ENCODE measurements at regions of chr5 and their contacts with region 1.

Region 1: GRCh38 chr5:175700991-175701390 is 43.1 kb downstream of the HRH2 start:
- DNase-seq: no peak
- H3K4me3 ChIP-seq: no peak overlapping the region
- H3K27ac ChIP-seq: no peak overlapping the region
- H3K4me1 ChIP-seq: no peaks in the 10 kb centered on the region
- H3K27me3 ChIP-seq: no peaks in the 10 kb centered on the region
- CTCF ChIP-seq: peak; percentile 18 to 49 (median 44)
- EP300 ChIP-seq: no peak
- POLR2A ChIP-seq: no peak

Region 2: GRCh38 chr5:176134529-176135223 is 433.7 kb after region 1 on chr5:
- in situ Hi-C with region 1: no loop called
- intact Hi-C with region 1: loop called (anchors 5 kb)
- DNase-seq: no peak
- H3K4me3 ChIP-seq: no peak overlapping the region
- H3K27ac ChIP-seq: no peak overlapping the region
- H3K4me1 ChIP-seq: no peaks in the 10 kb centered on the region
- H3K27me3 ChIP-seq: peaks cover 40% of the 10 kb centered on the region
- CTCF ChIP-seq: no peak
- EP300 ChIP-seq: no peak
- POLR2A ChIP-seq: no peak

Measured in transverse colon (tissue), 4 donors.